ENCODE measurements at regions of chrX and their contacts with region 1.

Region 1: DNA sequence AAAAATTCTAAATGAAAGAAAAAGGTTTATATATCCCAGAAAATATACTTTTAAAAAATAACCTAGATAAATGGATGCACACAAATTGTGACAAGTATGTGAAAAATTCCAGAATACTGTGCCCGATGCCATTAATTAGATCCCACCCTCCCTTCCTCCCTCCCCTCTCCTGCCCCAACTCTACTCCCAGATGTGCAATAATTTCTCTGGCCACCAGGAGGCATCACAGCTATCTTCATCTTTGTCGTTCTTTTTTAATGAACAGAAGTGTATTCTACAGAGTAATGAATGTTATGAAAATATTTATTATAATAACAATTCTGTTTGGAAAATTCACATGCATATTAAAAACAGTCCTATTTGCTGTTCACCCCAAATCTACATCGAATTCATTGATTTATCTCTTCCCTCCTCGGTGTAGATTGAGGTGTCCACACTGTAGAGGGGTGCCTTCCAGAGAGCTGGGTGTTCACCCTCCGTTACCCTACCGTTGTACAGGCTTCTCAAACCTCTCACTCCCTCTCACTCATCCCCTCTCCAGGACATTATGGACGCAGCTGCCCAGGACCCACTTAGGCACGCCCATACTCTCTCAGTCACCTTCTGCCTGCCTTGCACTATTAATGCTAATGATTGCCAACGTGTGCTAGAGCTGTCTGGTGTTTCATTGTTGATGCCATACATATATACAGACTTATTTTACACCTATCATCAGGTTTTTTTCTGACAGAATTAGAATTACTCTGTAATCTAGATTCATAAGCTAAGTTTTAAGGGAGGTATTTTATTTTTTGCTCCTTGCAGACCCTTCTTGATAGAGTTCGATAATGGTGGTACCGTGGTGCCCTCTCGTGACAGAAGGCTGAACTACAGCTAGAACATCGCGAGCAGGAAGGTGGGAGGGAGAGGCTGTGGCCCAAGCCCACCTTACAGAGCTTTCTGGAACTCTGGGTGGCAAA is 14.1 kb downstream of the RAB40AL start:
- DNase-seq: peak; percentile 52 to 70 (median 61)
- H3K4me3 ChIP-seq: peak overlapping the region in 5 of 7 experiments; percentile 40 to 65 (median 49)
- H3K27ac ChIP-seq: no peak overlapping the region
- H3K4me1 ChIP-seq: peaks cover 0 to 5% (median 2%) of the 10 kb centered on the region in 4 experiments
- H3K27me3 ChIP-seq: peaks cover 0 to 2% (median 0%) of the 10 kb centered on the region in 5 experiments

Region 2: GRCh38 chrX:102846544-102847236 is 104.5 kb before region 1 on chrX:
- CTCF ChIA-PET with region 1: no interaction called
- POLR2A ChIA-PET with region 1: no interaction called
- DNase-seq: no peak
- H3K4me3 ChIP-seq: no peak overlapping the region
- H3K27ac ChIP-seq: no peak overlapping the region
- H3K4me1 ChIP-seq: no peaks in the 10 kb centered on the region
- H3K27me3 ChIP-seq: peaks cover 0 to 4% (median 0%) of the 10 kb centered on the region in 5 experiments

Region 3: GRCh38 chrX:102934624-102935023 is 16.6 kb before region 1 on chrX:
- CTCF ChIA-PET with region 1: interaction called, 18 read pairs
- POLR2A ChIA-PET with region 1: no interaction called
- DNase-seq: peak; percentile 12 to 58 (median 37)
- H3K4me3 ChIP-seq: no peak overlapping the region
- H3K27ac ChIP-seq: no peak overlapping the region
- H3K4me1 ChIP-seq: no peaks in the 10 kb centered on the region
- H3K27me3 ChIP-seq: no peaks in the 10 kb centered on the region

Region 4: GRCh38 chrX:103002576-103002975 is 51.4 kb after region 1 on chrX:
- CTCF ChIA-PET with region 1: no interaction called
- POLR2A ChIA-PET with region 1: no interaction called
- DNase-seq: no peak
- H3K4me3 ChIP-seq: no peak overlapping the region
- H3K27ac ChIP-seq: no peak overlapping the region
- H3K4me1 ChIP-seq: no peaks in the 10 kb centered on the region
- H3K27me3 ChIP-seq: peaks cover 0 to 3% (median 0%) of the 10 kb centered on the region in 5 experiments

Region 5: DNA sequence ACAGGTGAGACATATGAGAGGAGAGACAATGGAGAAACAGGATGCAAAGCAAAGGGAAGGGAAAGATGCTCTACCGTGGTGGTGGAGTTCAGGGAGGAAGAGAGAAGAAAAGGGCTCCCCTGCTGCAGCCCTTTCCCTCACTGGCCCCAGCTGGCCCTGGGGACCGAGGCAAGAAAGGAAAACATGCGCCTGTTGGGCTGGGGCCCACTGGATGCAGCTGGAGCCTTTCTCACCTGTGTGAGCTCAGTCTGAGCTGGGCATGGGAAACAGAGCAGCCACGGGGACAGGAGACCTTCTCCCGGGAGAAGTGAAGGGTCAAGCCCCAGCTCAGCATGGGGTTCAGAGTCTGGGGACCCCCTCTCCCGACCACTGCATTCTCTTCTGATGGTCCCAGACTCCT is 129.9 kb after region 1 on chrX:
- CTCF ChIA-PET with region 1: no interaction called
- POLR2A ChIA-PET with region 1: no interaction called
- DNase-seq: no peak
- H3K4me3 ChIP-seq: no peak overlapping the region
- H3K27ac ChIP-seq: no peak overlapping the region
- H3K4me1 ChIP-seq: no peaks in the 10 kb centered on the region
- H3K27me3 ChIP-seq: peaks cover 0 to 26% (median 0%) of the 10 kb centered on the region in 5 experiments

Region 6: DNA sequence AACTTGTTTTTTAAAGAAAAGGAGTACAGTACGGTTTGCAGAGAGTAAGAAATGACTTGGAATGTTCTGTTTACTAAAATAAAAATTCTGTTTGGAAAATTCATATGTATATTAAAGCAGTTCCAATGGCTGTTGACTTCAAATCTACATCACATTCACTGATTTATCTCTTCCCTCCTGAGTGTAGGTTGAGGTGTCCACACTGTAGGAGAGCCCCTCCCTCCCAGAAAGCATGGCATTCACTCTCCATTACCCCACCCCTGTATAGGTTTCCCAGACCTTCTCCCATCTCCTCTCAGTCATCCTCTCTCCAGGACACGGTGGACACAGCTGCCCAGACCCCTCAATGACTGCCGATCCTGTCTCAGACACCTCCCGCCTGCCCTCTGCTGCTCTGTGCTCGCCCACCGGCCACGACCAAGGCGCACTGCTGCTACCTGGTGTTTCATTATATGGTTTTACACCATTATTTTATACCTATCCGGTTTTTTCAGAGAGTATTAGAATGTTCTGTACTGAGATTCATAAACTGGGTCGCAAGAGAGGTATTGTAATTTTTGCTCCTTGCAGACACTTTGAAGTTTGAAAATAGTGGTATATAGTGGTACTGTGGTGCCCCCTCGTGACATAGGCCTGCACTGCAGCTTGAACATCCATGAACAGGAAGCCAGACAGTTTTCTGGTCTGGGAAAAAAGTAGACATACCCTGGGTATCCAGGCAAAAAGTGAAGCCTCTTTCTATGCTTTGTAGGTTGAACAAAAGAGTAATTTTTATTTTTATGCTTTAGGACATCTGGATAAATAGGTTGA is 225.0 kb after region 1 on chrX:
- CTCF ChIA-PET with region 1: interaction called, 16 read pairs
- POLR2A ChIA-PET with region 1: no interaction called
- DNase-seq: peak; percentile 33 to 73 (median 63)
- H3K4me3 ChIP-seq: peak overlapping the region in 3 of 7 experiments; percentile 17 to 68 (median 34)
- H3K27ac ChIP-seq: no peak overlapping the region
- H3K4me1 ChIP-seq: peaks cover 0 to 4% (median 1%) of the 10 kb centered on the region in 4 experiments
- H3K27me3 ChIP-seq: peaks cover 0 to 7% (median 0%) of the 10 kb centered on the region in 5 experiments

Measured in common myeloid progenitor, CD34-positive (primary cell).